Dorsolateral prefrontal cortex (tissue), 120 donors: ENCODE measurements at regions of chr9 and their contacts with region 1.

Region 1: DNA sequence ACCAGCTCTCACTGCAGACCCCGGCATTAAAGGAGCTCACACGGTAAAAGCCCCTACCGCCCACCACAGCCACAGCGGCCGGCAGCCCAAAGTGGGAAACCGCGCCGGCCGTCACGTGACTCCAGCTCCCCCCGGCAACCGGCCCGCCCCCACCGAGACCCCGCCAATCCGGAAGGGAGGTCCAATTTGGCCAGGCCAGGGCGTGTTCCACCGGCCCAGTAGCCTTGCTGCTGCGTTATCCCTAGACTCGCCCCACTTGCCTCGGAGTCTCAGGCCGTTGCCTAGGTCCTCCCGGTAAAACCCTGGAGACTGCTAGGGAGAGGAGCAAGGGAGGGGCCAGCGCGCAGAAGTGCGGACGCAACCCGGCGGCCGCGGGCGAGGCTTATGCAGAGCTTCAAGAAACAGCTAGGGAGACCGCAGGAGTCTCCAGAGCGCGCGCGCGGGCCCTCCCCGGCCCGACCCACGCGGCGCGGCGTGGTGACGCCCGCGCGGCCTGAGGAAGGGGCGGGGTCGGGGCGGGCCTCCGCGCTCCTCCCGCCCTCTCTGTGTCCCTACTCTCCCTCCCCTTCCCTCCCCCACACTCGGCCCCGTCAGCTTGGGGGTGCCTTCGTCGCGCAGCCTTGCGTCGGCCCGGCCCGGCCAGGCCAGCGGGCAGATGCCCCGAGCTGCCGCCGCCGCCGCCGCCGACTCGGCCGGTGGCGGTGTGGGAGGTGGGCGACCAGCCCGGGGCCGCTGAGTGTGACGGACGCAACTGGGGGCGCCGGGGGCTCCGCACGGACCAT is at the start of gene RIC1:
- DNase-seq: peak; percentile 81 to 93 (median 90)
- H3K4me3 ChIP-seq: peak within 1 kb of the TSS; percentile 58 to 100 (median 94)
- H3K27ac ChIP-seq: peak within 1 kb of the TSS; percentile 75 to 98 (median 93)
- H3K27me3 ChIP-seq: no peaks in the 10 kb centered on the region
- CTCF ChIP-seq: peak in 21 of 56 donors; percentile 5 to 45 (median 25)
- total RNA-seq, gene RIC1: 14.5 to 24.0 (median 19.2) TPM

Region 2: GRCh38 chr9:5582835-5583195 is 45.9 kb before region 1 on chr9:
- intact Hi-C with region 1: no loop called
- DNase-seq: no peak
- H3K4me3 ChIP-seq: no peak overlapping the region
- H3K27ac ChIP-seq: no peak overlapping the region
- H3K27me3 ChIP-seq: no peaks in the 10 kb centered on the region
- CTCF ChIP-seq: no peak

Region 3: GRCh38 chr9:5786370-5787127 is 157.8 kb after region 1 on chr9:
- intact Hi-C with region 1: loop called in 1 of 2 experiments (anchors 5 kb)
- DNase-seq: peak in 5 of 10 donors; percentile 30 to 56 (median 52)
- H3K4me3 ChIP-seq: no peak overlapping the region
- H3K27ac ChIP-seq: peak overlapping the region in 50 of 59 donors; percentile 3 to 78 (median 50)
- H3K27me3 ChIP-seq: no peaks in the 10 kb centered on the region
- CTCF ChIP-seq: peak in 1 of 56 donors; percentile 12